ENCODE measurements at regions of chr17 and their contacts with region 1.

Region 1: GRCh38 chr17:33674685-33675084 is 381.6 kb upstream of the ASIC2 start:
- DNase-seq: no peak
- H3K4me3 ChIP-seq: no peak overlapping the region
- H3K27ac ChIP-seq: no peak overlapping the region
- H3K4me1 ChIP-seq: no peaks in the 10 kb centered on the region
- H3K27me3 ChIP-seq: no peaks in the 10 kb centered on the region
- CTCF ChIP-seq: peak; percentile 68 to 77 (median 74)

Region 2: DNA sequence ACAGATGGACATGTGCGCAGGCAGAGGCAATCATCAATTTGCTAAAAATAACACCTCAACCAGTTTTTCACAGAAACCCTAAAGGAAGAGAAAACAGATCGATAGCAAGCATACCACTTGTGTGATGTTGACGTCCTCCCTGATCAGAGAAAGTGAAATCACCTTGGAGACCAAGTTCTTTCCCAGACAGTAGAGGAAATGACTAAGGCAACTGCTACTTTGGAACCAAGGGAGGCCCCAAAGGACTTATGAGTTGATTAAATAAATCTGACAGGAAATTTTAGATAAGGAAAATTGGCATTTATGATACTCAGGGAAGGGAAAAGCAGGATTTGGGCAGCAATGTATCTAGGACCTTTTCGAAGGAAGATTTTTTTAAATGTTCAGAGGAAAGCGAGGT is 114.5 kb before region 1 on chr17:
- dilution Hi-C with region 1: loop called (anchors 25 kb)
- DNase-seq: no peak
- H3K4me3 ChIP-seq: no peak overlapping the region
- H3K27ac ChIP-seq: no peak overlapping the region
- H3K4me1 ChIP-seq: no peaks in the 10 kb centered on the region
- H3K27me3 ChIP-seq: no peaks in the 10 kb centered on the region
- CTCF ChIP-seq: no peak

Region 3: GRCh38 chr17:33725675-33726271 is 51.1 kb after region 1 on chr17:
- dilution Hi-C with region 1: no loop called
- DNase-seq: no peak
- H3K4me3 ChIP-seq: no peak overlapping the region
- H3K27ac ChIP-seq: no peak overlapping the region
- H3K4me1 ChIP-seq: no peaks in the 10 kb centered on the region
- H3K27me3 ChIP-seq: peaks cover 3% of the 10 kb centered on the region
- CTCF ChIP-seq: peak; percentile 71 to 88 (median 83)

Region 4: DNA sequence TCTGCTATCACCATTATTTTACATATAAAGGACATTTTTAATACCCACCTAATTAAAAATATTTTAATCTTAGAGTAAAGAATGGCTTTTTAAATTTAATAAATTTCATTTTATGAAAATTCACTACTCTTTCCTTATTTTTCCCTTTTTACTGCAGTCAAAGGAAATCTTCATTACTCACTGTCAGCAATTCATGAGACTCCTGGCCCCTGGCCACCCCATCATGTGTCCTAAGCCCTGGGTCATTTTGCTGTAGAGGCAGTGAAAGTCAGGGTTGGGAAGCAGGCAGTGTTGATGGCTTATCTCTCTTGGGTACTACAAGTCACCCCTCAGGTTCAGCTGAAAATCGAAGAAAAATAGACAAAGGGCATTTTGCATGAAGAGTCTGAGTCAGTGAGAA is 111.8 kb after region 1 on chr17:
- dilution Hi-C with region 1: no loop called
- DNase-seq: no peak
- H3K4me3 ChIP-seq: no peak overlapping the region
- H3K27ac ChIP-seq: no peak overlapping the region
- H3K4me1 ChIP-seq: no peaks in the 10 kb centered on the region
- H3K27me3 ChIP-seq: no peaks in the 10 kb centered on the region
- CTCF ChIP-seq: no peak

Measured in keratinocyte (primary cell).